CD4-positive, alpha-beta memory T cell (primary cell): ENCODE measurements at regions of chr16 and their contacts with region 1.

Region 1: DNA sequence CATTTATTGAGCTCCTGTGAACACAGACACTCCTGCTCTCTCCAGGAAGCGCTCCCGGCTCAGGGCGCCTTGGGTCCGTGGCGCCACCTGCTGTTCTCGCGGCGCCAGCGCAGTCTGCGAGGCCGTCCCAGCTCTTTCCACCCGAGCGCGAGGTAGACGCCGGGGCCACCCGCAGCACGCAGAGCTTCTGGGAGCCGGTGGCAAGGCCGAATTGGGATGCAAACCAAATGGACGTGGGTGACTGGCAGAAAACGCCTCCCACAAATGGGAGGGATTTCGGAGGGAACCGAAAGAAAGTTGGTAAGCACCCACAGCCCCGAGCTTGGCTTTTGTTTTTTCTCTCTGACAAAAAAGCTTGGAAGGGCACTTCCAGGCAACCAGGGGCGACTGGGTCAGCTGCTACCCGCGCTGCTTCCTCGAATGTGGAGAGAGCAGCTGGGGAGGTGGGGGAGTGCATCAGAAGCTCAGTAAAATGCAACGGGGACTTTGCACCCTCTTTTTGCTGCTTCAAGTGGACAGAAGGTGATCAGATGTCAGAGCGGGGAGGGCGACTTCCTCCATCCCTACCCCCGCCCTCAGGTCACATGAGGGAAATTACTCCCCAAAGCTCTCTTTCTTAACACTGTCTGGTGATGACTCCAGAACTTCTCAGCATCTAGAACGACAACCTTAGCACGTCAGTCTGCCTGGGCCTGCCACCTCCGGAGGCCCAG is 13.5 kb upstream of the N4BP1 start:
- DNase-seq: peak; percentile 71 to 84 (median 78)
- H3K4me3 ChIP-seq: peak overlapping the region; percentile 22 to 53
- H3K4me3 Mint-ChIP-seq: peak overlapping the region; percentile 64 to 89 (median 80)
- H3K27ac ChIP-seq: peak overlapping the region; percentile 26
- H3K27ac Mint-ChIP-seq: peak overlapping the region in 5 of 7 donors; percentile 15 to 86 (median 54)
- H3K4me1 ChIP-seq: peaks cover 10% of the 10 kb centered on the region
- H3K4me1 Mint-ChIP-seq: peaks cover 5 to 19% (median 10%) of the 10 kb centered on the region in 4 donors
- H3K27me3 ChIP-seq: no peaks in the 10 kb centered on the region
- H3K27me3 Mint-ChIP-seq: no peaks in the 10 kb centered on the region

Region 2: DNA sequence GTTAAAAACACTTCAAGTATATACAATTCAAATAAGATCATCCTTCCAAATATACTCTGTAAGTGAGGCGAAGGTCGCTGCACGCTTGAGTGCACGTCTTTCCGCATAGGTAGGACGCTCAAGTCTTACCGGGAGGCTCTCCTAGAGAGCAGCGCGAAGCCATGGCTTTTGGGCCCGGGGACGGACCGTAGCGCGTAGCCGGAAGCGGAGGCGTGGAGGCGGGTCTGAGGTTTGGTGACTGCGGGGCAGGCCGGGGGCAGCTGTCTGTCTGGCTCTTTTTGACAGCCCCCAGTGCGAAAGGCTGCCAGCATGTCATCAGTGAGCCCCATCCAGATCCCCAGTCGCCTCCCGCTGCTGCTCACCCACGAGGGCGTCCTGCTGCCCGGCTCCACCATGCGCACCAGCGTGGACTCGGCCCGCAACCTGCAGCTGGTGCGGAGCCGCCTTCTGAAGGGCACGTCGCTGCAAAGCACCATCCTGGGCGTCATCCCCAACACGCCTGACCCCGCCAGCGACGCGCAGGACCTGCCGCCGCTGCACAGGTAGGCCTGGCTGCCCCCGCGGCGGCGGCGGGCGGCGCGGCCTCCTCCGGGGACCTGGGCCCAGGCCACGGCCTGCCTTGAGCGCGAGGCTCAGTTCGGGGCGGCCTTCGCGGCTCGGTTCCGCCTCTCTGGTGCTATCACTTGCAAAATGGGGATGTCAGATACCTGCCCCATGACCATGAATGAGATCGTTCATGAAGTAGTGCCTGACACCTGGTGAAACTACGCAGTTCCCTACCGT is 379.2 kb before region 1 on chr16 and contains the start of gene LONP2:
- CTCF ChIA-PET with region 1: no interaction called
- POLR2A ChIA-PET with region 1: no interaction called
- intact Hi-C with region 1: loop called (anchors 5 kb)
- DNase-seq: peak; percentile 91 to 93 (median 92)
- H3K4me3 ChIP-seq: peak within 1 kb of the TSS; percentile 91 to 94
- H3K4me3 Mint-ChIP-seq: peak within 1 kb of the TSS; percentile 88 to 98 (median 94)
- H3K27ac ChIP-seq: peak within 1 kb of the TSS; percentile 70
- H3K27ac Mint-ChIP-seq: peak within 1 kb of the TSS; percentile 86 to 98 (median 95)
- H3K4me1 ChIP-seq: peaks cover 45% of the 10 kb centered on the region
- H3K4me1 Mint-ChIP-seq: peaks cover 28 to 52% (median 43%) of the 10 kb centered on the region in 4 donors
- H3K27me3 ChIP-seq: no peaks in the 10 kb centered on the region
- H3K27me3 Mint-ChIP-seq: no peaks in the 10 kb centered on the region
- total RNA-seq, gene LONP2: 96.2 to 101 TPM

Region 3: GRCh38 chr16:48365581-48366164 is 257.8 kb before region 1 on chr16:
- CTCF ChIA-PET with region 1: interaction called, 163 read pairs
- POLR2A ChIA-PET with region 1: interaction called, 12 read pairs
- intact Hi-C with region 1: no loop called
- DNase-seq: peak; percentile 73 to 78 (median 75)
- H3K4me3 ChIP-seq: peak overlapping the region; percentile 82 to 86
- H3K4me3 Mint-ChIP-seq: peak overlapping the region; percentile 85 to 97 (median 94)
- H3K27ac ChIP-seq: peak overlapping the region; percentile 76
- H3K27ac Mint-ChIP-seq: peak overlapping the region; percentile 88 to 99 (median 98)
- H3K4me1 ChIP-seq: peaks cover 22% of the 10 kb centered on the region
- H3K4me1 Mint-ChIP-seq: peaks cover 23 to 34% (median 31%) of the 10 kb centered on the region in 4 donors
- H3K27me3 ChIP-seq: no peaks in the 10 kb centered on the region
- H3K27me3 Mint-ChIP-seq: no peaks in the 10 kb centered on the region

Region 4: GRCh38 chr16:48526058-48526957 is 97.2 kb before region 1 on chr16:
- CTCF ChIA-PET with region 1: interaction called, 20 read pairs
- POLR2A ChIA-PET with region 1: no interaction called
- intact Hi-C with region 1: no loop called
- DNase-seq: no peak
- H3K4me3 ChIP-seq: no peak overlapping the region
- H3K4me3 Mint-ChIP-seq: no peak overlapping the region
- H3K27ac ChIP-seq: no peak overlapping the region
- H3K27ac Mint-ChIP-seq: no peak overlapping the region
- H3K4me1 ChIP-seq: no peaks in the 10 kb centered on the region
- H3K4me1 Mint-ChIP-seq: no peaks in the 10 kb centered on the region
- H3K27me3 ChIP-seq: no peaks in the 10 kb centered on the region
- H3K27me3 Mint-ChIP-seq: no peaks in the 10 kb centered on the region

Region 5: DNA sequence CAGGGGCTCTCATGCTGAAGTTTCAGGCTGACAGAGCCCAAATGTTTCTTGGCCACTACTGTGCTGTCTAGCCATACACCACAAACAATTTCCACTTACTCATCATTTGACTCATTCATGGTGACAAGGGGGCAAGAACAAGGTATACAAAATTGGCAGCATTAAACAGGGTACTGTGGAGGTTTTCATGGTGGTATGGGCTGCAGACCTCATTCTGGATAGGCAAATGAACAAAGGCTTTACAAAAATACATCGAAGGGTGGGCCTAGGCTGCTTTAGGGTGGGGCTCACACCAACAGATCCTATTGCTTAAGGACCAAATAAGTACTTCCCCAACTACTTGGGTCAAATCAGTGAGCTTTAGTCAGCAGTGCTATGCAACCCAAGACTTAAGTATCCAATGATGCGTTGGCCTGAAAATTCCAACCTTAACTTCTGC is 66.5 kb before region 1 on chr16:
- CTCF ChIA-PET with region 1: interaction called, 82 read pairs
- POLR2A ChIA-PET with region 1: interaction called, 5 read pairs
- intact Hi-C with region 1: no loop called
- DNase-seq: peak in 1 of 5 donors; percentile 56
- H3K4me3 ChIP-seq: no peak overlapping the region
- H3K4me3 Mint-ChIP-seq: peak overlapping the region in 3 of 8 donors; percentile 22 to 47 (median 33)
- H3K27ac ChIP-seq: no peak overlapping the region
- H3K27ac Mint-ChIP-seq: peak overlapping the region in 6 of 7 donors; percentile 9 to 68 (median 42)
- H3K4me1 ChIP-seq: peaks cover 63% of the 10 kb centered on the region
- H3K4me1 Mint-ChIP-seq: peaks cover 51 to 83% (median 72%) of the 10 kb centered on the region in 4 donors
- H3K27me3 ChIP-seq: no peaks in the 10 kb centered on the region
- H3K27me3 Mint-ChIP-seq: no peaks in the 10 kb centered on the region

Region 6: DNA sequence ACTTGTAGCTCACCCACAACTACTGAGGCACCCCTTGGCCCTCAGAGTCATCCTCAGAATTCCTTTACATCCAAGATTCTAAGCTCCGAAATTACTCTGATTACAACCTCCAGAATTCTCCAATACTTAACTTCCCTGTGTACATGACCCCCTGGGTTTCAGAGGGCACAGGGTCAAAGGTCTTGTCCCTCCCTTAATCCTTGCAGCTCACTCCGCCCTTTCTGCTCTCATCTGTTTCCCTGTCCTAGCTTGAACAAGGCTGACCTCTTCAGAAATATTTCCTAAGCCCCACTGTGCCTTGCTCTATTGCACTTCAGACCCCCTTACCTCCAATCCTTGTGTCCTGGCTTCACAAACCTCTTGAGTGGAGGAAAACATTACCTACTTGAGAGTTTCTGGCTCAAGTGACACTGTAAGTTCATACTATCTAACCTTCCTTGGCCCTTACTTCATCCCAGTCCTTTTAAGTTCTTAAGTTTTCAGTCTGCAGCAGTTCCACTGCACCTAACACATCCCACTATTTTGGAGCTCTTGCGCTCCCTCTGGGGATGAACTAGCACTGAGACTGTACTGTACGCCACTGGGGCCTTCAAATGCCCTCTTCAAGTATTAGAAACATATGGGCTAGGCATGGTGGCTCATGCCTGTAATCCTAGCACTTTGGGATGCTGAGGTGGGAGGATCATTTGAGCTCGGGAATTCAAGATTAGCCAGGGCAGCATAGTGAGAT is 19.6 kb before region 1 on chr16:
- CTCF ChIA-PET with region 1: interaction called, 124 read pairs
- POLR2A ChIA-PET with region 1: interaction called, 5 read pairs
- intact Hi-C with region 1: loop called (anchors 2 kb)
- DNase-seq: no peak
- H3K4me3 ChIP-seq: no peak overlapping the region
- H3K4me3 Mint-ChIP-seq: peak overlapping the region in 6 of 8 donors; percentile 16 to 58 (median 50)
- H3K27ac ChIP-seq: no peak overlapping the region
- H3K27ac Mint-ChIP-seq: peak overlapping the region; percentile 4 to 69 (median 38)
- H3K4me1 ChIP-seq: peaks cover 93% of the 10 kb centered on the region
- H3K4me1 Mint-ChIP-seq: peaks cover 42 to 61% (median 45%) of the 10 kb centered on the region in 4 donors
- H3K27me3 ChIP-seq: no peaks in the 10 kb centered on the region
- H3K27me3 Mint-ChIP-seq: no peaks in the 10 kb centered on the region

Region 7: GRCh38 chr16:48790151-48790550 is 166.7 kb after region 1 on chr16:
- CTCF ChIA-PET with region 1: no interaction called
- POLR2A ChIA-PET with region 1: no interaction called
- intact Hi-C with region 1: no loop called
- DNase-seq: no peak
- H3K4me3 ChIP-seq: no peak overlapping the region
- H3K4me3 Mint-ChIP-seq: no peak overlapping the region
- H3K27ac ChIP-seq: no peak overlapping the region
- H3K27ac Mint-ChIP-seq: no peak overlapping the region
- H3K4me1 ChIP-seq: no peaks in the 10 kb centered on the region
- H3K4me1 Mint-ChIP-seq: no peaks in the 10 kb centered on the region
- H3K27me3 ChIP-seq: no peaks in the 10 kb centered on the region
- H3K27me3 Mint-ChIP-seq: peaks cover 2 to 5% of the 10 kb centered on the region in 2 donors